IMR-90 (cell line): ENCODE measurements at regions of chr12 and their contacts with region 1.

Region 1: DNA sequence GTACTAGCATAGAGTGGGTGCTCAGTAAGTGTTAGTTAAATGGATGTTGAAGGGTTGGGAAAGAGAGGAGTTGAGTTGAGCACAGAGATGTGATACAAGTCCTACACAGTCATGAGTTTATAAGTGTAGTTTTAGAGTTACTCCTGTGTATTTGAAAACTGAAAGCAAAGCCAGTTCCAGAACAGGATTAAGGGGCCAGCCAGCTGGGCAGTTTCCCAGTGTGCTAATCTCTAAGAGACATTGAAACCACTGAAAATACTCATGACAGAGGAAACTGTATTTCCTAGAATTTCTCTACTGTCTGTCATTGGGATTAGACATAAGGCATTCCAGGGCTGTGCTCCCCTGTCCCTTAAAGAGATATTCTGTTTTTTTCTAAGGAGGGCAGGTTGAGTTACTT is 101.0 kb downstream of the DERA start:
- DNase-seq: peak; percentile 61
- ATAC-seq: peak; percentile 93
- H3K4me3 ChIP-seq: no peak overlapping the region
- H3K27ac ChIP-seq: no peak overlapping the region
- H3K4me1 ChIP-seq: no peaks in the 10 kb centered on the region
- H3K27me3 ChIP-seq: no peaks in the 10 kb centered on the region
- CTCF ChIP-seq: no peak
- POLR2A ChIP-seq: no peak
- RAD21 ChIP-seq: no peak

Region 2: DNA sequence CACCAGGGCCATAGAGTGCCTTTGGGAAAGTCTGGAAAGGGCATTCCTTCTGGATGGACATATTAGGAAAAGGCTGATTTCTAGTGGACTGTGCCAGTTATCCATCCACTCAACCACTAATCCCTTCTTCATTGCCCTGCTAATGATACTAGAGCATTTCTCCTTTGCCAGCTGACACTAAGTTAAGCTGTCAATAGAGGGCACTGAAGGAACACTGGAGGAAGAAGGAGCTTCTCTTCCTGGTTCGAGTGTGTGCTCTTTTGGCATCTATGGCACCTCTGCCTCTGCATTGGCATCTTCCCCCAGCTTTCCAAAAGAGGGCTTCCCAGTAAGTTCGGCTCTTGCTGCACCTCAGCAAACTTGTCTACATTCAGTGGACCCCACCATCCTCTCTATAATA is 64.4 kb after region 1 on chr12:
- CTCF ChIA-PET with region 1: no interaction called
- POLR2A ChIA-PET with region 1: no interaction called
- dilution Hi-C with region 1: no loop called
- in situ Hi-C with region 1: loop called (anchors 10 kb)
- intact Hi-C with region 1: no loop called
- DNase-seq: peak; percentile 2
- ATAC-seq: no peak
- H3K4me3 ChIP-seq: no peak overlapping the region
- H3K27ac ChIP-seq: no peak overlapping the region
- H3K4me1 ChIP-seq: no peaks in the 10 kb centered on the region
- H3K27me3 ChIP-seq: no peaks in the 10 kb centered on the region; the same call in 1 of the 2 replicates
- CTCF ChIP-seq: peak; percentile 41
- POLR2A ChIP-seq: no peak
- RAD21 ChIP-seq: peak; percentile 46